ENCODE measurements at regions of chr3 and their contacts with region 1.

Region 1: DNA sequence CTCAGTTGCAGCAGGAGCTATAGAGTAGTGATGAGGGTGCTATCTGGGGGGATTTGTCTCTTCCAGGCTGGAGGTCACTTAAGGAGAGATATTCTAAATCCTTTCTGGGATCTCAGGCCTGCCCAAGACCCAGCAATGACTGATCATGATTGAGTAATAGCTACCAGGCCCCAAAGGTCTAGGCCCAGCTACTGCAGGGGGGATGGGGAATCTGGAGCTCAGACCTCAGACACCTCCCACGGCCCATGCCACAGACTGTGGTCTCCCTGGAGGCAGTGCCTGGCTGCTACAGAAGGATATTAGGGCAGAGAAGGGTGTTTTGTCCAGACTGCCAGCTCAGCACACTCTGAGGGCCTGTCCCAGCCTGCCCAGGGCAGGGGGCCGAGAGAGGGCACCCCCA is 6.9 kb downstream of the SLC38A3 start:
- DNase-seq: no peak
- CTCF ChIP-seq: no peak

Region 2: DNA sequence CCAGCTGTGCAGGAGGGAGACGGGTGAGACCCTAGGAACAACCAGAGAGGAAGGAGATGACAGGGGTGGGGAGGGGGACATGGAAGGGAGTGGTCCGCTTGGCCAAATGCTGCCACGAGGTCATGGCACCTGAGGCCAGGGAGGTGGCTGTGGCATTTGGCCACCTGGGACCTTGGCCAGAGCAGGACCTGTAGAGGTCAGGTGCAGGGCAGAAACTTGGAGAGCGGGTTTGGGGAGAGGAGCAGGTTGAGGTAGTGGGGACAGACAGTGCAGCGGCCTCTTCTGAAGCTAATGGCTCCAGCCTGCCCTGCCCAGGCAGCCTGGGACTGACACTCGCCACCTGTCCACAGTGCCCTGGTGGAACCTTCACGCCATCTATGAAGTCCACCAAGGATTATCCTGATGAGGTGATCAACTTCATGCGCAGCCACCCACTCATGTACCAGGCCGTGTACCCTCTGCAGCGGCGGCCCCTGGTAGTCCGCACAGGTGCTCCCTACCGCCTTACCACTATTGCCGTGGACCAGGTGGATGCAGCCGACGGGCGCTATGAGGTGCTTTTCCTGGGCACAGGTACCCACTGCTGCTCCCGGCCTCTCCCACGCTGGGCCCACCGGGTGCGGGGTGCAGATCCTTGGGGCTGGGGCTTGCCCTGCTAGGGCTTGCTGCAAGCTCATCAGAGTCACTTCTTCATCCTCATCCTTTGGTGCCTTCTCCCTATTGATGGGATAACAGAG is 27.5 kb before region 1 on chr3:
- CTCF ChIA-PET with region 1: interaction called, 393 read pairs
- POLR2A ChIA-PET with region 1: interaction called, 10 read pairs
- DNase-seq: no peak
- CTCF ChIP-seq: no peak